Dorsolateral prefrontal cortex (tissue), 120 donors: ENCODE measurements at regions of chr15 and their contacts with region 1.

Region 1: GRCh38 chr15:89129123-89129815 is 41.0 kb downstream of the ABHD2 start:
- DNase-seq: peak in 5 of 10 donors; percentile 39 to 64 (median 55)
- H3K4me3 ChIP-seq: no peak overlapping the region
- H3K27ac ChIP-seq: peak overlapping the region in 39 of 59 donors; percentile 2 to 95 (median 48)
- H3K27me3 ChIP-seq: no peaks in the 10 kb centered on the region
- CTCF ChIP-seq: peak; percentile 49 to 81 (median 70)

Region 2: DNA sequence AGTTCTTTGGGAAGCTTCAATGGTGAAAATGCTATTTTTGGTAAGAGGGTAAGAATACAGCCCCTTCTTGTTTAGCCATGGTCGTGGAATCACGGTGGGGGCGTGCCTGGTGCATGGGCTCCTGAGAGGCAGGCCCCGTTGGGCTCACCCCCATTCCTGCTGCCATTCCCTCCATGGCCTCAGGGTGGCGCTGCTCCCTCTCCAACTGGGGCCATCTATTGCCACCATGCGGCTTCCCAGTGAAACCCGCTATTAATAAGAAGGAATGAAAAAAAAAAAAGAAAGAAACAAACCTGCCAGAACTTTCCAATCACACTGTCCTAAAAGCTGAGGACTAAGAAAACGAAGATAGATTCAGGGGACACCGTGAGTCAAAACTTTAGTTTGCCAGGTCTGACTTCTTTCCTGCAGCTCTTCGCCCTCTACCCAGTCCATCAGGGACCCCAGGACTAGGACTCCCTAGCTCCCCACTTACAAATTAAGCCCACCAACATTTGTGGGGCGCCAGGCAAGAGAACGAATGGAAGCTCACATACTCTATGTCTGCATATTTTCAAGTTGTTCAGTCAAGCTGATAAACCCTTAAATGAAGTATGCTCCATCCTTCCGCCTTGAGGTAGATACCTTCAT is 71.7 kb before region 1 on chr15:
- intact Hi-C with region 1: loop called in 1 of 2 experiments (anchors 2 kb)
- DNase-seq: peak; percentile 67 to 86 (median 80)
- H3K4me3 ChIP-seq: no peak overlapping the region
- H3K27ac ChIP-seq: peak overlapping the region in 19 of 59 donors; percentile 2 to 84 (median 44)
- H3K27me3 ChIP-seq: no peaks in the 10 kb centered on the region
- CTCF ChIP-seq: peak; percentile 88 to 100 (median 99)